ENCODE measurements at regions of chr20 and their contacts with region 1.

Region 1: DNA sequence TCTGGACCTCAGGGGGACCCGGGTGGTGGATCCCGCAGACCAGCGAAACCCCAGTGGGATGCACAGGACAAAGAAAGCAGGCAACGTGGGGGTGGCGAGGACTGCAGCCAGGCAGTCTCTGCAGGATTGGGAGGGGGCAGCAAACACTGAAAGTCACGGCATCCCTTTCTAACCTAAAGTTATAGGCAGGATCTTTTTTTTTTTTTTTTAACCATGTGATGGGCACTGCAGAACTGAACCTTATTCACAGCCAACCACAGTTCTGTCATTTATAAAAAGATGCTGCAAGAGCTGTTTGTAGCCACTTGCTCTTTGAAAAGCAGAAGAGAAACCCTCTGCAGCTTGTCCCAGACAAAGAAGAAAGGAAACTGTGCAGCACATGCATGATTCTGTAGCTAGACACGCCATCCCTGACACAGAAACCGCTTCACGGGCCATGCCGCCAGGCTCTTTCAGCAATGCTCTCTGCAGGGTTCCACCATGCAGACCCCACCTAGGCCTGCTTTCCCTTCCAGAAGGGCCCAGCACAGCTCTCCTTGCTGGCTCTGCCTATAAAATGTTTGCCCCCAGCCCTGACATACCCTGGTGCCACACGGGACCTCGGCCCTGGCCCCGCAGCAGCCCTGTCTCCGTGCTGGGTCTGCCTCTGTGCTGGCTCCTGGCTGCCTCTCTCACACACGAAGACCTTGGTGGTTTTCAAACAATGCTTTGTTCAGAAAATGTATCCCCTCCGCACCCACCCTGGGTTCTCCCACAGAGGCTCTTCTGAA is 70.8 kb downstream of the PYGB start:
- DNase-seq: peak in 3 of 14 experiments; percentile 11 to 62 (median 49)
- ATAC-seq: peak; percentile 29
- H3K4me3 ChIP-seq: no peak overlapping the region
- H3K4me3 Mint-ChIP-seq: no peak overlapping the region
- H3K27ac ChIP-seq: no peak overlapping the region
- H3K27ac Mint-ChIP-seq: no peak overlapping the region
- H3K4me1 ChIP-seq: no peaks in the 10 kb centered on the region
- H3K4me1 Mint-ChIP-seq: peaks cover 4% of the 10 kb centered on the region
- H3K27me3 ChIP-seq: no peaks in the 10 kb centered on the region
- H3K27me3 Mint-ChIP-seq: no peaks in the 10 kb centered on the region
- CTCF ChIP-seq: no peak

Region 2: DNA sequence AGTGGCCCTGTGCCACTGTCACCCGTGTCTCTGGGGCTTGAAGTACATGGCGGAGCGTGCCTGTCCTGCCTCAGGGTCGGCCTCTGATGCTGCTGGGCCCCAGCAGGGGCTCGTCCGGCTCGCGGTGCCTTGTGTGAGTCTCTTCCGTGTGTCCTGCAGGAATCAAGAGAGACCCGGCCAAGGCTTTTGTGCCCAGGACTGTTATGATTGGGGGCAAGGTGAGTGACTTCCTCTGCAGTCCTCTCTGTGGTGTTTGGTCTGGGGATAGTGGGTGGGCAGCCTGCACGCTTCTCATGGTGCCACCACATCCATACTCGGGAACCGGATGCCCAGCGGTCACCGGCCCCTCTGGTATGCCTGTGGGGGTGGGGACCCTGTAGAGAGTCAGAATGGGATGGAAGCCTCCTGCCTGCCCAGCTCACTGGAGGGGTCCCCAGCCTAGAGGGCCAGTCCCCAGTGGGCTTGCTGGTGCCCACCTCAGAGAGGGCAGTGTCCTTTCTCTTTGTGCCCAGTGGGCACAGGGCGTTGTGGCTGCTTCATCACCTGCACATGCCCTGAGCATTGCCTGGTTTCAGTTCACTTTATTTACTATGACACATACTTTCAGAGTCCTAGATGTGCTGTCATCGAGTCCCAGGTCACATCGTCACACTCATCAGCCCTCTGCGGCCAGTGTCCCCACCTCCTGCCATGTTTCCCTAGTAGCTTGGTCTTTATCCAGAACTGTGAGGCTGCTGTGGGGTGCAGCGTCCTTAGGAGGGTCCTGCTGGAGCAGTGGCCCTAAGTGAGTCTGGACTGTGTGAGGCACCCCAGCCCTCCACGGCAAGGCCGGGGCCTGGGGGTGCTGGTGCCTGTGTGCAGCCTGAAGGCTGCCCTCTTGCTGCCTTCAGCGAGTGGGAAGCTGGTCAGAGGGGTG is 30.1 kb before region 1 on chr20:
- CTCF ChIA-PET with region 1: no interaction called
- POLR2A ChIA-PET with region 1: no interaction called
- intact Hi-C with region 1: loop called in 1 of 2 experiments (anchors 2 kb)
- DNase-seq: peak in 1 of 14 experiments; percentile 26
- ATAC-seq: no peak
- H3K4me3 ChIP-seq: no peak overlapping the region
- H3K4me3 Mint-ChIP-seq: no peak overlapping the region
- H3K27ac ChIP-seq: no peak overlapping the region
- H3K27ac Mint-ChIP-seq: no peak overlapping the region
- H3K4me1 ChIP-seq: no peaks in the 10 kb centered on the region
- H3K4me1 Mint-ChIP-seq: no peaks in the 10 kb centered on the region
- H3K27me3 ChIP-seq: no peaks in the 10 kb centered on the region
- H3K27me3 Mint-ChIP-seq: no peaks in the 10 kb centered on the region
- CTCF ChIP-seq: no peak

Region 3: GRCh38 chr20:25418776-25419175 is 100.1 kb after region 1 on chr20:
- CTCF ChIA-PET with region 1: no interaction called
- POLR2A ChIA-PET with region 1: no interaction called
- intact Hi-C with region 1: no loop called
- DNase-seq: no peak
- ATAC-seq: no peak
- H3K4me3 ChIP-seq: no peak overlapping the region
- H3K4me3 Mint-ChIP-seq: no peak overlapping the region
- H3K27ac ChIP-seq: no peak overlapping the region
- H3K27ac Mint-ChIP-seq: no peak overlapping the region
- H3K4me1 ChIP-seq: no peaks in the 10 kb centered on the region
- H3K4me1 Mint-ChIP-seq: no peaks in the 10 kb centered on the region
- H3K27me3 ChIP-seq: no peaks in the 10 kb centered on the region
- H3K27me3 Mint-ChIP-seq: no peaks in the 10 kb centered on the region
- CTCF ChIP-seq: no peak